H1 (cell line): ENCODE measurements at regions of chr2 and their contacts with region 1.

Region 1: GRCh38 chr2:71100195-71100964 is 29.6 kb downstream of the MCEE start:
- DNase-seq: peak; percentile 34 to 84
- H3K4me3 ChIP-seq: no peak overlapping the region
- H3K27ac ChIP-seq: no peak overlapping the region
- H3K4me1 ChIP-seq: peaks cover 0 to 7% (median 5%) of the 10 kb centered on the region in 4 experiments; a peak in 4 of 7 replicates
- H3K27me3 ChIP-seq: no peaks in the 10 kb centered on the region
- CTCF ChIP-seq: peak; percentile 71 to 81 (median 74)
- EP300 ChIP-seq: no peak
- POLR2A ChIP-seq: no peak
- RAD21 ChIP-seq: peak; percentile 65 to 70

Region 2: DNA sequence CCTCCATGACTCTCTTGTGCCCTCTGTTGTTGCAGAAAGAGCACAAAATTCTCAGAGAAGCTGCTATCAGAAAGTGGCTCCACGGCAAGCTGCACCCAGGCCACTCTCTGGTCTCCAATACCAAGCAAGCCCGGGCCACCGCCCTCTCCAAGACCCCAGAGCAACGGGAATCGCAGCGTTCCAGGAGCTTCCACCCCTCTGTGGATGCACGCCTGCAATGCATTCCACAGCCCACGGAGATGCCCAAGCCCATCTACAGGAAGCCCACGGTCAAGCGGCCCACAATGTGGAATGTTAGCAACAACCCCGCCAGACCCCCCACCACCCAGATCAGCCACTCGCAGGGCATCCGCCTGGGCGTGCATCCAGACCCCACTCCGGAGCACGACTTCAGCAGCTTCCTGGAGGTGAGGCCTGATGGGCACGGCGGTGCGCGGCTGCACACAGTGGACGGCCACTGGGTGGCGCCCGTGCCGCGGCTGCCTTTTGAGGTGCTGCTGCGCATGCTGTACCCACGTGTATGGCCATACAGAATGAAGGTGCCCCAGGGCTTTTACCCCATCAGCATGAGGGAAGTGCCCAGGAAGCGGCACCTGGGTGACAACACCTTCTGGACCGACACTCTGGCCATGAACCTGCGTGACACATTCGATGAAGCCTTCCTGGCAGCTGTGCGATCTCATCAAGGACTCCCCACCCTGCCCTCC is 115.7 kb before region 1 on chr2:
- CTCF ChIA-PET with region 1: interaction called, 11 read pairs
- POLR2A ChIA-PET with region 1: no interaction called
- DNase-seq: peak in 1 of 2 experiments; percentile 93
- H3K4me3 ChIP-seq: peak overlapping the region in 1 of 4 experiments; percentile 35; a peak in 2 of 8 replicates
- H3K27ac ChIP-seq: no peak overlapping the region
- H3K4me1 ChIP-seq: peaks cover 0 to 6% (median 4%) of the 10 kb centered on the region in 4 experiments; a peak in 4 of 7 replicates
- H3K27me3 ChIP-seq: peaks cover 0 to 4% (median 2%) of the 10 kb centered on the region in 4 experiments; a peak in 5 of 7 replicates
- CTCF ChIP-seq: peak; percentile 90 to 98 (median 91)
- EP300 ChIP-seq: no peak
- POLR2A ChIP-seq: no peak
- RAD21 ChIP-seq: peak; percentile 67 to 78

Region 3: DNA sequence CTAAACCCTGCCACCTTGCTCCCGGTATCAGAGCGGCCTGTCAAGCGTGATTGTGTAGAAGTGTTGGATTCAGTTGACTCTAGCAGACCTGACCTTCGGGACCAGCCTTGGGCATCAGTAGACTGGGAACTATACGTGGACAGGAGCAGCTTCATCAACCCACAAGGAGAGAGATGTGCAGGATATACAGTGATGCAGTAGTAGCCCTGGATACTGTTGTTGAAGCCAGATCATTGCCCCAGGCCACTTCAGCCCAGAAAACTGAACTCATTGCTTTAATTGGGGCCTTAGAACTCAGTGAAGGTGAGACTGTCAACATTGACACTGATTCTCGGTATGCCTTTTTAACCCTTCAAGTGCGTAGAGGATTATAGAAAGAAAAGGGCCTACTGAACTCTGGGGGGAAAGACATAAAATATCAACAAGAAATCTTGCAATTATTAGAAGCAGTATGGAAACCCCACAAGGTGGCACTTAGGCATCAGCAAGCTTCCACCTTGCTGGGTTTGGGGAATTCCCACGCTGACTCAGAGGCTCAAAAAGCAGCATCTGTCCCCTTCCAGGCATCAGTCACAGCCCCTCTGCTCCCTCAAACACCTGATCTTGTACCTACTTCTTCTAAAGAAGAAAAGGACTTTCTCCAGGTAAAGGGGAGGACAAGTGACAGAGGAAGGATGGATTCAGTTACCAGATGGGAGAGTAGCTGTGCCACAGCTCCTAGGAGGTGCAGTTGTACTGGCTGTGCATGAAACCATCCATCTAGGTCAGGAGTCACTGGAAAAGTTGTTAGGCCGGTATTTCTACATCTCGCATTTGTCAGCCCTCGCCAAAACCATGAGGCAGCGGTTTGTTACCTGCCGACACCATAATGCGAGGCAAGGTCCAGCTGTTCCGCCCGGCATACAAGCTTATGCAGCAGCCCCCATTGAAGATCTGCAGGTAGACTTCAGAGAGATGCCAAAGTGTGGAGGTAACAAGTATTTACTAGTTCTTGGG is 50.7 kb before region 1 on chr2:
- CTCF ChIA-PET with region 1: no interaction called
- POLR2A ChIA-PET with region 1: no interaction called
- DNase-seq: no peak
- H3K4me3 ChIP-seq: no peak overlapping the region
- H3K27ac ChIP-seq: no peak overlapping the region
- H3K4me1 ChIP-seq: no peaks in the 10 kb centered on the region
- H3K27me3 ChIP-seq: no peaks in the 10 kb centered on the region
- CTCF ChIP-seq: no peak
- EP300 ChIP-seq: no peak
- POLR2A ChIP-seq: no peak
- RAD21 ChIP-seq: peak in 1 of 2 experiments; percentile 11; a peak in 1 of 4 replicates

Region 4: DNA sequence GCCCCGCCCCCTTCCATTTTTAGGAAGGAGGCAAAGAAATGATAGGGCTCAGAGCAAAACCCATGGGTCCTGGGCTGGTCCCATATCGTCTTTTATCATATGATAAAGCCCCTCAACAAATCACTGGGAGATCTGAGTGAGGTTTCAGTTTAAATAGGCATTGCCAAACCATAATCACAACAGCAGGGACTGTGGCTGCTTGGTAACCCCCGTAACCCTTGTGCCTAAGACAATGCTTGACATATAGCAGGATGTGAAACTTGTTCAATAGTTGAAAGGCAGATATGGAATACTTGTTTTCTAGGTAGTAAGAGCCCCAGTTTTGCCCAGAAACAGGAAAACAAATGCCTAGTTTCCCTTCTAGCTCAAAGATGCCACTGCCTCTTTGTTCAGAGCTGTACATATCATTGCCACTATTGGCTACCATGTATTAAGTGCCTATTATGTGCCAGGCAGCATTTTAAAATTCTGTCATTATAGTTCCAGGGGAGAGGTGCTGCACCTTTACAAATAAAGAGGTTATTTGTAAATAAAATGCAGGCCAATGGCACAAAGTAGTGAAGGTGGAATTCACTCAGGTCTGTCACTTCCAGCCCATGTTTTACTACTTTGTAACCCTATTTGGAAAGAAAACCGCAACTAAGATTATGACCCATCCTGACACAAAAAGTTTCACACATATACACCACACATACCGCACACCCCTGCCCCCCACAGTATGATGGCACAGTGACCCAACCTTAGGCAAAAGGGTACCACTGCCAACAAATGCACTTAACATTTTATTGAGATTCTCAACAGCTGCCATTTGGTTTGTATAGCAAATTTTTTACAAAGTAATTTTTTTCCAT is 17.8 kb before region 1 on chr2:
- CTCF ChIA-PET with region 1: interaction called, 8 read pairs
- POLR2A ChIA-PET with region 1: interaction called, 18 read pairs
- DNase-seq: no peak
- H3K4me3 ChIP-seq: no peak overlapping the region
- H3K27ac ChIP-seq: no peak overlapping the region
- H3K4me1 ChIP-seq: peaks cover 7 to 10% (median 7%) of the 10 kb centered on the region in 4 experiments
- H3K27me3 ChIP-seq: no peaks in the 10 kb centered on the region
- CTCF ChIP-seq: no peak
- EP300 ChIP-seq: no peak
- POLR2A ChIP-seq: no peak
- RAD21 ChIP-seq: no peak

Region 5: DNA sequence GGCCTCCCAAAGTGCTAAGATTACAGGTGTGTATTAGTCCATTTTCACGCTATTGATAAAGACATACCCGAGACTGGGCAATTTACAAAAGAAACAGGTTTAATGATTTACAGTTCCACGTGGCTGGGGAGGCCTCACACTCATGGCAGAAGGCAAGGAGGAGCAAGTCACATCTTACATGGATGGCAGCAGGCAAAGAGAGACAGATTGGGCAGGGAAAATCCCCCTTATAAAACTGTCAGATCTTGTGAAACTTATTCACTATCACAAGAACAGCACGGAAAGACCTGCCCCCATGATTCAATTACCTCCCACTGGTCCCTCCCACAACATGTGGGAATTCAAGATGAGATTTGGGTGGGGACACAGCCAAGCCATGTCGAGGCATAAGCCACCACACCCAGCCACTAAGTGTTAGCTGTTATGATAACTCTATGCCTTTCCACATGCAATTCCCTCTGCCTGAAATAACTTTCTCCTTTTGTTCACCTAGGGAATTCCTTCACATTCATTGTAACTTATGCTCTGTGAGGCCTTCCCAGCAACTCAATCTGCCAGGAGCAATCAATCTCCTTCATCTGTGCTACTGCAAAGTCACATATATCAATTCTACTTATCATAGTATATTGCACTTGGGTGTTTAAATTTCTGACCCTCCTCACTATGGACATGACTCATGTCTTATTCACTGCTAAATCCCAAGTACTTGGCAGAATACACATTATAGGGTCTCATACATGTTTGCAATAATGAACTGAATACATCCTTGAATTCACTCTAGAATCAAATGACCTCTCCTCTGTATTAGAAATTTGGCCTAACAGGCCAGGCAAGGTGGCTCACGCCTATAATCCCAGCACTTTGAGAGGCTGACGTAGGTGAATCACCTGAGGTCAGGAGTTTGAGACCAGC is 22.3 kb after region 1 on chr2:
- CTCF ChIA-PET with region 1: interaction called, 12 read pairs
- POLR2A ChIA-PET with region 1: interaction called, 6 read pairs
- DNase-seq: no peak
- H3K4me3 ChIP-seq: no peak overlapping the region
- H3K27ac ChIP-seq: no peak overlapping the region
- H3K4me1 ChIP-seq: no peaks in the 10 kb centered on the region; a peak in 1 of 7 replicates
- H3K27me3 ChIP-seq: no peaks in the 10 kb centered on the region
- CTCF ChIP-seq: no peak
- EP300 ChIP-seq: no peak
- POLR2A ChIP-seq: no peak
- RAD21 ChIP-seq: no peak

Region 6: DNA sequence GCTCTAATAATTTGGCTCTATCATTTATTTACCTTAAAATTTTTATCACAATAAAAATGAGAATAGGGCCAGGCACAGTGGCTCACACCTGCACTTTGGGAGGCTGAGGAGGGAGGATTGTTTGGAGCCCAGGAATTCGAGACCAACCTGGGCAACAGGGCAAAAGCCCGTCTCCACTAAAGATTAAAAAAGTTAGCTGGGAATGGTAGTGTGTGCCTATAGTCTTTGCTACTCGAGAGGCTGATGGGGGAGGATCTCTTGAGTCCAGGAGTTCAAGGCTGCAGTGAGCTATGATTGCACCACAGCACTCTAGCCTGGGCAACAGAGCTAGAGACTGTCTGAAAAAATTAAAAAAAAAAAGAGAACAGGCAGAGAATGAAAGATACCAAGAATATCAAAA is 35.8 kb after region 1 on chr2:
- CTCF ChIA-PET with region 1: interaction called, 28 read pairs
- POLR2A ChIA-PET with region 1: interaction called, 4 read pairs
- DNase-seq: no peak
- H3K4me3 ChIP-seq: no peak overlapping the region
- H3K27ac ChIP-seq: no peak overlapping the region
- H3K4me1 ChIP-seq: no peaks in the 10 kb centered on the region
- H3K27me3 ChIP-seq: no peaks in the 10 kb centered on the region
- CTCF ChIP-seq: no peak
- EP300 ChIP-seq: no peak
- POLR2A ChIP-seq: no peak
- RAD21 ChIP-seq: no peak

Region 7: GRCh38 chr2:71157124-71157793 is 56.9 kb after region 1 on chr2:
- CTCF ChIA-PET with region 1: interaction called, 21 read pairs
- POLR2A ChIA-PET with region 1: no interaction called
- DNase-seq: peak; percentile 43 to 96
- H3K4me3 ChIP-seq: no peak overlapping the region
- H3K27ac ChIP-seq: no peak overlapping the region
- H3K4me1 ChIP-seq: peaks cover 0 to 2% (median 0%) of the 10 kb centered on the region in 4 experiments; a peak in 3 of 7 replicates
- H3K27me3 ChIP-seq: no peaks in the 10 kb centered on the region; a peak in 1 of 7 replicates
- CTCF ChIP-seq: peak; percentile 80 to 90 (median 88)
- EP300 ChIP-seq: no peak
- POLR2A ChIP-seq: no peak
- RAD21 ChIP-seq: peak; percentile 94 to 95